ENCODE measurements at regions of chr7 and their contacts with region 1.

Region 1: DNA sequence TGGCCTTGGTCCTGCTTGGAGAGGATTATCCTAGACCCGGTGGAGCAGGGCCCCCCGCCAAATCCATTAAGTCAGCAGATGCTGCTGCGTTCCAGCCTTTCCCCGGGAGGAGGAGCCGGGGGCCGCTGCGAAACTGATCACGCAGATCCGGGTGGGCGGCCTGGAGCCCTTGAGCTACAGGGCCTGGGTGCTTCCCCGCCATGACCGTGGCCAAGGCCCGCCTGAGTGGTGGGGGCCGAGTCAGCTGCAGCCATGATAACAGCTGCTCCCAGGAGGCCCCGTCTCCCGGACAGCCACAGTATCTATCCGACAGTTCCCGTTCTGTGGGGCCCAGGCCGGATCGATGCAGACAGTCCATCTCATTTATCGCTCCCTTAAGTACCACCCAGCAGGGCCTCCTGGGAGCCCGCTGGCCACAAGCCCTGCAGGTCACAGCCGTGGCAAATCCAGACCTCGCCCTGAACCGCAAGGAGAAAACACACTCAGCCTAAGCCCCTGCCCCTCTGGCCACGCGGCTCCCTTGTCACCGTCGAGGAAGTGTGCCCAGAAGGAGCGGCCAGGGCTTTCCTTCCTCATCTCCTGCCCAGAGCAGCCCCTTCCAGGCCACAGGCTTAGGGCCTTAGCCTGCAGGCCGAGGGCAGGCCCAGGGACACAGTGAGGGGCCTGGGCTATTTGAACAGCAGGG is 34.4 kb upstream of the SLC29A4 start:
- DNase-seq: peak; percentile 63 to 81 (median 77)
- ATAC-seq: peak in 3 of 4 donors; percentile 71 to 89 (median 88)
- H3K4me3 ChIP-seq: peak overlapping the region in 1 of 12 donors; percentile 10
- H3K27ac ChIP-seq: peak overlapping the region in 3 of 12 donors; percentile 5 to 57 (median 14)
- H3K4me1 ChIP-seq: peaks cover 0 to 4% (median 0%) of the 10 kb centered on the region in 12 donors
- H3K27me3 ChIP-seq: peaks cover 0 to 4% (median 0%) of the 10 kb centered on the region in 9 donors
- CTCF ChIP-seq: no peak
- POLR2A ChIP-seq: no peak

Region 2: DNA sequence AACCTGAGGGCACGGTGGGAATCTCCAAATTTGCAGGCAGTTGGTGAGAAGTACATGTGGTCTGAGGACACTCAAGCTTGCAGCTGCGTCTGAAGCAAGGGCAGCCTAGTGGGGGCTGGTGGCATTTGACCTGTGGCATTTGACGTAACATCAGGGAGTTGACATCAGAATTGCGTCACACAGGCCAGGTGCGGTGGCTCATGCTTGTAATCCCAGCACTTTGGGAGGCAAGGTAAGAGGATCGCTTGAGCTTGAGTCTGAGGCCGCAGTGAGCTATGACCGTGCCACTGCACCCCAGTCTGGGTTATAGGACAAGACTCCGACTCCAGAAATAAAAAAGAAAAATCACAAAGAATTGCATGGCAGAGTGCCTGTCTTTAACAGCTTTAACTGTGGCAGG is 228.2 kb before region 1 on chr7:
- intact Hi-C with region 1: no loop called
- DNase-seq: no peak
- ATAC-seq: no peak
- H3K4me3 ChIP-seq: no peak overlapping the region
- H3K27ac ChIP-seq: no peak overlapping the region
- H3K4me1 ChIP-seq: no peaks in the 10 kb centered on the region
- H3K27me3 ChIP-seq: no peaks in the 10 kb centered on the region
- CTCF ChIP-seq: no peak
- POLR2A ChIP-seq: no peak

Region 3: DNA sequence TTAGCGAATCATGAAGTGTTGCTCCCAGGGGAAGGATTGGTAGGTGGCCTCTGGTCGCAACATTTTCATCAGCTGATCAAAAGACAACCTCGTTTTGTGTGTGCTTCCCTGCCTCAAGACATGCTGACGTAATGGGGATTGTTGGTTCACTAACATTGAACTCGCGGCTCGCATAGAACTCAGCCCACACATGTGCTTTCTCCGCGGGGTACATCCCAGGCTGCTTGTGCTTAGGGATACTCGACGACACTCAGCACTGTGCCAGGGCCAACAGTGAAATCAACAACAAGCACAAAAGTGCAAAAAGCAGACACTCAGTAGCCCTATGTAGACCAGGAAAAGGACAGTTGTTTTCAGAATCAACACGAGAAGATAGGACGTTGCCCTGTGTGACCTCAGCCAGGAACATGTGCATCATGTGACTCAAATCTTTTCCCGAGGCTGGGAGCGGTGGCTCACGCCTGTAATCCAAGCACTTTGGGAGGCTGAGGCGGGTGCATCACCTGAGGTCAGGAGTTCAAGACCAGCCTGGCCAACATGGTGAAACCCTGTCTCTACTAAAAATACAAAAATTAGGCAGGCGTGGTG is 37.5 kb before region 1 on chr7:
- intact Hi-C with region 1: no loop called
- DNase-seq: no peak
- ATAC-seq: no peak
- H3K4me3 ChIP-seq: no peak overlapping the region
- H3K27ac ChIP-seq: no peak overlapping the region
- H3K4me1 ChIP-seq: peaks cover 0 to 4% (median 0%) of the 10 kb centered on the region in 12 donors
- H3K27me3 ChIP-seq: no peaks in the 10 kb centered on the region
- CTCF ChIP-seq: no peak
- POLR2A ChIP-seq: no peak

Region 4: DNA sequence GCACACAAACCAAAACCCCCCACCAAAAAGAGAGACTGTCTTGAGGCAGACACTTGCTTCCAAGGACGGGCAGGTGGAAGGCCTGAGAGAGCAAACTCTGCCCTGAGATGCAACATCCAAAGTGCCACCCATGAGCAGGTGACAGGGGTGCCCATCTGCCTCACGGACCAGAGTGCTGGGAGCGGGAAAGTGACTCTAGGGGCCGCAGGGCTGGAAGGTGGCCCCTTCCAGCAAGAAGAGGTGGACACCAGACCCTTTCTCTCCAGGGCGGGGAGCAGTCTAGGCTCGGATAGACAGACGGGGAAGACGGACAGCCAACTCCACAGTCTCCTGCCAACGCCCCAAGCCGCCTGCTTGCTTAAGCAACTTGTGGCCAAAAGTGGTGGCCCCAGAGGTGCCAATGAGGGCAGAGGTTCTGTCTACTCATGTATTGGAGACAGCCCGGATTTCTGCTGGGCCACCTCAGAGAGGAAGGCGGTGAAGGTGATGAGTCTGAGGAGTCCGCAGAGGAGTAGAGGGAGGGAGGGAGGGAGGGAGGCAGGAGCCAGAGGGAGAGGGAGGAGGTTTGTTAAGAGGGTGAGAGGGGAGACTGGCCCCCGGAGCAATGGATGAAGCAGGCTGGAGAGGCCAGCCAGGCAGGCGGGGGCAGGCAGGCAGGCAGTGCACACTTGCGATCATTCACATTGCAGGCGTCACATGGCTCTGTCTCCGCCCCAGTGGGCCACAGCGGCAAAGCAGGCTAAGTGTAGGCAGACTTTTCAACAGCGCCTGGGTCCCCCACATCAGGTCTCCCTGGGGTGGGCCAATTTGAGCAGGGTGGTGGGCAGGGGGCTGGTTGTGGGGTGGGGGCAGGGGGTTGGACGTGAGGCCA is 100.0 kb after region 1 on chr7:
- intact Hi-C with region 1: loop called in 5 of 10 experiments (anchors 5 to 10 kb)
- DNase-seq: no peak
- ATAC-seq: peak in 1 of 4 donors; percentile 11
- H3K4me3 ChIP-seq: no peak overlapping the region
- H3K27ac ChIP-seq: peak overlapping the region in 1 of 12 donors; percentile 60
- H3K4me1 ChIP-seq: no peaks in the 10 kb centered on the region
- H3K27me3 ChIP-seq: no peaks in the 10 kb centered on the region
- CTCF ChIP-seq: no peak
- POLR2A ChIP-seq: no peak

Region 5: DNA sequence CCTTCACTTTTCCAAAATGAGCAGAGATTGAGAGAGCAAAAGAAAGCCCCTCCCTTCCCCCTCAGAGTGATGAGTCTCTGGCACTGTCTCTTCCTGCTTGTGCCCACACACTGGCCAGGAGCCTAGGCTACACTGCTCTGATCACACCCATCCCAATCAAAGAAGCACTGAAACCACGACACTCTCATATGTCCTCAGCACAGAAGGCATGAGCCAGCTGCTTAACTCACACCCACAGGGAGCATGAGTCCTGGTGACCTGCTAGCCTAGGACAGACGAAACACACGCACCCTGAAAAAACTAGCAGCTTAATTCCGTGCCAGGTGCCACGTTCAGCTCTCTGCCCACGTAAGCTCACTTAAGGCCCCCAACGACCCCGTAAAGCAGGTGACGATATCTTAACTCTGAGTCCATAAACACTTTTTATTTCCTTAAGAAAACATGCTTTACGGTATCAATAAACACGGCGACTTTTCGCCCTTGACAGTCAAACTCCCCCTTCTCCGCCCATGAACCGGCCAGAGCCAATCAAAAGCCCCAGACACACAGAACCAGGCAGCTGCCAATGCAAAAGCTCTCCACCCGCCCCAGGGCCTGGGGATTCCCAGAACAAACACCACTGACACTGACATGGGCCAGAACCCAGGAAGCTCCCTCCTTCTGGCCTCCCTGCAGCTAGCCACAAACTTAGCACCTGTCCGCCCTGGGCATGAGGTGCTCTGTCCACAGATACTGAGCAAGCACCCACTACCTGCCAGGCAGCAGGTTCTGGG is 106.3 kb after region 1 on chr7:
- intact Hi-C with region 1: loop called in 5 of 10 experiments (anchors 5 to 10 kb)
- DNase-seq: peak in 4 of 5 donors; percentile 71 to 85 (median 78)
- ATAC-seq: peak; percentile 90 to 96 (median 94)
- H3K4me3 ChIP-seq: peak overlapping the region in 8 of 12 donors; percentile 16 to 41 (median 32)
- H3K27ac ChIP-seq: peak overlapping the region in 11 of 12 donors; percentile 9 to 86 (median 73)
- H3K4me1 ChIP-seq: peaks cover 0 to 27% (median 16%) of the 10 kb centered on the region in 12 donors
- H3K27me3 ChIP-seq: no peaks in the 10 kb centered on the region
- CTCF ChIP-seq: no peak
- POLR2A ChIP-seq: no peak

Measured in heart left ventricle (tissue), 16 donors.